ENCODE measurements at regions of chr2 and their contacts with region 1.

Region 1: DNA sequence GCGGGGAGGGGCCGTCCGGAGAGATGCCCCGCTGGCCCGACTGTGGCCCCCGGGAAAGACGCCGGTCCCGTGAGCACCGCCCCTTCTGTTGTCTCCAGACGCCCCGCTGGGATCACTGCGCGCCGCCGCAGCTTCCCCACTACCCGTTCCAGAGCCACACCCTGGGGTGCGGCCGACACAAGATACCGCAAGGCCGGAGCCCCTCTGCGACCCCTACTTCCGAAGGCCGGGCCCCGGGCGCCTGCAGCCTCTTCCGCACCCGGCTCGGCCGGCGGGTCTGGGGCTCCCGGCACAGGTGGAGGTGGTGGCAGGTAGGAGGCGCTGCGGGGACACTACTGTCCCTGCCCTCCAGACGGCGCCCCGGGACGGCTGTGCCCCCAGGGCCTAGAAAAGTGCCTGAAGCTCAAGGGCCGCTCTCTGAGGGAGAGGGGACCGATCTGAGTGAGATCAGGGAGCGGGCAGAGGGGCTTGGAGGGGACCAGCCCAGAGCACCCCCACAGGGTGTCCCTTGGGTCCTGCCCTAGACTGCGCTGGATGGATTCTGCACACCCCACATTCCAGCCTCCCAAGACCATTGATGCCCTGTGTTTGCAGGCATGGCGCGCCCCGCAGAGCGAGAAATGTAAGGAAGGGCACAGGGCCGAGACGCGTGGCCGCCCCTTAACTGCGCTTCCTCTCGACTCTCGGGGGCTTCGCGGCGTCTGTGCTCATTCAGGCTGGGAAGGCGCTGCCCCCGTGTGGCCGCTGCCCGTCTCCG is 80.0 kb downstream of the GFPT1 start:
- DNase-seq: peak; percentile 70 to 96
- H3K4me3 ChIP-seq: peak overlapping the region; percentile 45
- CTCF ChIP-seq: peak in 1 of 3 donors; percentile 78
- POLR2A ChIP-seq: no peak

Region 2: DNA sequence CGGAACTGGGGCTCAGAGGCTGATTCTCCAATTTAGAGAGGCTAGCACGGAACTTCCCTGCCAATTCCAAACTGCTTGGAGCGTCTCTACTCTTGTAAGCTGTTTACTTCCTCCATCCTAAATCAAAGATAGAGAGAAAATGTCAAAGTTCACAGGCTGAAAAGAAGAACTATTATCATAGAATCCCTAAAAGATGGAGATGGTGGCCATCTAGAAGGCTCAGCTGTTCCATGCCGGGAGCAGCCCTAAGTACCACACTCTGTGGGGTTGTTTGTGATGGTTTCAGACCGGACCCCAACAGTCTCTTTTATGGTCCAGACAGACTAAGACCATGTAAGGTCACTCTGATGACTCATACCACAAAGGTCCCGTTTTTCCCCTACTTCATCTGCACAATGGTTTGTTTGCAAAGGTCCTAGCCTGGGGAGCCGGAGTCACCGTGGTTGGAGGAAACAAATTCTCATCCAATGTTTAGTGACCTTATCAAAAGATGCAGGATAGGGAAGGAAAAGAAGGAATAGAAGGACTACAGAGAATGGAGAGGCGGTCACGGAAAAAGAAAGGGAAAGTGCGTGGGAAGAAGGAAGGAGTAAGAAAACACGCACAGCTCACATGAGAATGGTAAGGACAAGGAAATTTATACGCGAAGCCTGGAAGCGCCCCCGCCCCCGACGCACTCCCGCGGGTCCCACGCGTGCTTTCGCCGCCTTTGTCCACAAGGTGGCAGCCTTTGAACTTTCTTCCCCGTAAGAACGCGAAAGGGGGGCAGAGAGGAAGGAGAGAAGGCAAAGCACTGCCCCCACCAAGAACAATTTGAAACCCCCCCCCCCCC is 294.5 kb before region 1 on chr2:
- intact Hi-C with region 1: loop called (anchors 5 kb)
- DNase-seq: peak; percentile 58 to 93
- H3K4me3 ChIP-seq: peak overlapping the region; percentile 79
- CTCF ChIP-seq: peak in 1 of 3 donors; percentile 45
- POLR2A ChIP-seq: no peak

Region 3: GRCh38 chr2:69278366-69278765 is 28.6 kb before region 1 on chr2:
- intact Hi-C with region 1: no loop called
- DNase-seq: no peak
- H3K4me3 ChIP-seq: no peak overlapping the region
- CTCF ChIP-seq: no peak
- POLR2A ChIP-seq: no peak

Measured in lower leg skin (tissue), 4 donors.